Posterior cingulate gyrus (tissue), 11 donors: ENCODE measurements at regions of chr19 and their contacts with region 1.

Region 1: DNA sequence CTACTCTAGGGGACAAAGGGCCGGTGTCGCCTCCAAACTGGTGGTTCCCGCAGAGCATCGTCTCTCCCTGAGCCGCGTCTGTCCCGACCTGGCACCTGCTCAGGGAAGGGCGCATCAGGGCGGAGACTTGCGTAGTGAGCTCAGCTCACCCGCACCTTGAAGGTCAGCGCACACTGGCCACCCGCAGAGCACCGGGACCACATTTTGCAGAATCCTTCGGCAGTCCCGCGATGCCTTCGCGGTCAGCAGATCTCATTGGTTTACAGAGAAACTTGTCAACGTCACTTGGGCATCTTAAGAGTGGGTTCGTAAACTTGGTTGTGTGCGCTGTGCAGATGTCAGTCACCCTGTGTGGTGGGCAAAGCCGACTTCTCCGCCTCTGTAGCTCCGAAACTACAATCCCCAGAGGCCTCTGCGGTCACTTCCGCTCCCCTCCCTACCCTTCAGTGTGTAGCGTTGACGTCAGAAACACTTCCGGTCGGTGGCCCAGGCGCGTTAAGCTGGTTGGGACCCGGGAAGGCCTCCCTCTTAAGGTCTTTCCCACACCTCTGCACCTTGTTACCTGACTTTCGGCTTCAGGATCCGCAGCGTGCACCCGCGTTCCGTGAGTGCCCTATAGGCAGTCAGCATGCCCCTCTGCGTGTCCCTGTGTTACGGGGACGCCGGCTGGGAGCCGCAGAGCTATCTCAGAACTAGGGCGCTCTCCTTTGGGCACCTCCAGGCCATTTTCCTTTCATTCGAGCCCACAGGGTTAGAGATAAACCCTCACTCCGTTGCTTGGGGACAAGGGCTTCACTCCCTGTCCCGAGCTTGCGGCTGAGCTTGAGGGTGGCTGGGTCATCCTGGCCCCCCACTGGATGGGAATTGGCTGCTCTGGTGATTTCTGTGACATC is 36.5 kb upstream of the ZNF527 start:
- DNase-seq: peak; percentile 92 to 99 (median 97)

Region 2: GRCh38 chr19:37370880-37371661 is 36.6 kb after region 1 on chr19 and contains the start of gene ZNF527:
- intact Hi-C with region 1: loop called (anchors 2 kb)
- DNase-seq: peak; percentile 98 to 100 (median 99)